ENCODE measurements at regions of chr14 and their contacts with region 1.

Region 1: GRCh38 chr14:74860906-74861733 is 14.8 kb downstream of the PROX2 start:
- DNase-seq: peak; percentile 97
- H3K4me3 Mint-ChIP-seq: no peak overlapping the region
- H3K27ac Mint-ChIP-seq: no peak overlapping the region
- H3K4me1 Mint-ChIP-seq: peaks cover 2% of the 10 kb centered on the region
- H3K27me3 Mint-ChIP-seq: no peaks in the 10 kb centered on the region

Region 2: DNA sequence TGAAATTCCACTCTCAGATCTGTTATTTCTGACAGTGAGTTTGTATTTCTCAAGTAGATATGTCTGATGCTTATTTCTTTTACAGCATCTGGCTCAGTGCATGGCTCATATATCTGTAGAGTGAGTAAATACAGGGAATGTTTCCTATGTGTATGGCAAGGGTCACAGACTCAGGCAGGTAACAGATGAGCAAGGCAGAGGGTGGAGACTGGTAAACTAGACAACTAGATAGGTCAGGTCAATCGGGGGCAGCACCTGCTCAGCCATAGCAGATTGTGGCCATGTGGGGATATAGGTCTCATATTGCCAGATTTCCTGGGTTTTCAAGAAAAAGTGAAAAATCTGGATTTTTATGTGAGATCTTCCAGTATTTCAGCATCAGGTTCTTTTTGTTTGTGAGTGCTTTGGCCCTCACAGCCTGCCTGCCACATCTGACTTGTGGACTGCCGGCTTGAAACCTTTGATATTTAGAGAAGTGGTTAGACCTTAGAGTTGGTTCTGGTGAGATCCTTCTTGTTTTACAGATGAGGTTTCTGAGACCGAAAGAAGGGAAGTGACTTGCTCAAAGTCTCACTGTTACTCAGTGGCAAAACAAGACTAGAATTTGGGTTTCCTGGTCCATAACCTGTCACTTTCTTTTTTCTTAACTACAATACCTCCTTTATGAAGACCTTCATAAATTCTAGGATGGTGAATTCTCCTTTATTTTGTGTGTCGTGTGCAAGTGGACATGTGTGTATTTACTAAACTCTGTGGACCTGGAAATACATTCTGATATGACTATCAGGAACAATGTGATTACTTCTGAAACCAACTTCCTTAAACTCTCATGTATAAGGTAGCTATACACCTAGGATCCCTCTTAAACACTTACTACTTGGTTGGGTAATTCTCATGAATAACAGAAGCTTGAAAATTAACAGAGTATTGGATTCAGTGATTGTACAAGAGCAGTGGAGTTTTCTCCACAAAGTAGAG is 19.6 kb before region 1 on chr14:
- CTCF ChIA-PET with region 1: interaction called, 14 read pairs
- intact Hi-C with region 1: no loop called
- DNase-seq: peak; percentile 46
- H3K4me3 Mint-ChIP-seq: no peak overlapping the region
- H3K27ac Mint-ChIP-seq: peak overlapping the region; percentile 54
- H3K4me1 Mint-ChIP-seq: peaks cover 54% of the 10 kb centered on the region
- H3K27me3 Mint-ChIP-seq: no peaks in the 10 kb centered on the region

Region 3: GRCh38 chr14:74881431-74882361 is 20.6 kb after region 1 on chr14 and contains the start of gene DLST:
- CTCF ChIA-PET with region 1: interaction called, 73 read pairs
- intact Hi-C with region 1: no loop called
- DNase-seq: peak; percentile 87
- H3K4me3 Mint-ChIP-seq: peak within 1 kb of the TSS; percentile 91
- H3K27ac Mint-ChIP-seq: peak within 1 kb of the TSS; percentile 94
- H3K4me1 Mint-ChIP-seq: peaks cover 63% of the 10 kb centered on the region
- H3K27me3 Mint-ChIP-seq: no peaks in the 10 kb centered on the region
- total RNA-seq, gene DLST: 126 to 132 TPM

Region 4: DNA sequence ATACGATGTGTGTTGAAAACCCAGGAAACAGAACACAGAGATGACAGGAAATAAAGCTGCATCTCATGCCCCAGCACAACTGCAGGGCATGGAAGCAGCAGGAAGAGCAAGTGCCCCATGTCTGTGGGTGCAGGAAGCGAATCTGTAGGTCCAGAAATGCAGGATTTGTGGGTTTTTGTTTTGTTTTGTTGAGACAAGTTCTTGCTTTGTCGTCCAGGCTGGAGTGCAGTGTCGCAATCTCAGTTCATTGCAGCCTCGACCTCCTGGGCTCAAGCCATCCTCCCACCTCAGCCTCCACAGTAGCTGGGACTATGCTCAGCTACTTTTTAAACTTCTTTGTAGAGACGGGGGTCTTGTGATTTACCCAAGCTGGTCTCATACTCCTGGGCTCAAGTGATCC is 68.1 kb after region 1 on chr14:
- CTCF ChIA-PET with region 1: interaction called, 14 read pairs
- intact Hi-C with region 1: no loop called
- DNase-seq: no peak
- H3K4me3 Mint-ChIP-seq: no peak overlapping the region
- H3K27ac Mint-ChIP-seq: no peak overlapping the region
- H3K4me1 Mint-ChIP-seq: peaks cover 10% of the 10 kb centered on the region
- H3K27me3 Mint-ChIP-seq: no peaks in the 10 kb centered on the region

Region 5: DNA sequence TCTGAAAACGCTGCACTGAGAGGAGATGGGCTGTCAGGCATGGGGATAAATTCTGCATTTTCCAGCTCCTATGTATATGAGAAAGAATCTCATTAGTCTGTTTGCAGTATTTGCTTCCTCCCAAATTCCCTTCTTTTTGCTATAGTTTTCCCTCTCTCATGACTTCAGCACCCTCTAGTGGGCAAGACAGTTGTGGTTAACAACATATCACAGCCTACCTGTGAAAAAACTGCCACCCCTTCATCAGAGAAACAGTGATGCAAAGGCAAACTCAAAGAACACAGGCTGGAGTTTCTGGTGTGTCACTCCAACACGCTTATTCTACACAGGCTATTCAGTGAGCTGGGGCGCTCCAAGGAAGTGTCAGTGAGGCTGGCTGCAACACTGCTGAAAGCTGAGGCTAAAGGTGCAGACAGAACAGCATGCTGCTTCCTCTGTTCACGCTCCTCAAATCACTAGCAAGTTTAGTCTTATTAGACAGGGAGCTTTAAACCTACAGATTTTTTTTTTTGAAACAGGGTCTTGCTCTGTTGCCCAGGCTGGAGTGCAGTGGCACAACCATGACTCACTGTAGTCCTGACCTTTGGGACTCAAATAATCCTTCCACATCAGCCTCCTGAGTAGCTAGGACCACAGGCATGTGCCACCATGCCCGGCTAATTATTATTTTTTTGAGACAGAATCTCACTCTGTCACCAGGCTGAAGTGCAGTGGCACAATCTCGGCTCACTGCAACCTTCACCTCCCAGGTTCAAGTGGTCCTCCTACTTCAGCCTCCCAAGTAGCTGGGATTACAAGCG is 227.7 kb after region 1 on chr14:
- CTCF ChIA-PET with region 1: interaction called, 48 read pairs
- intact Hi-C with region 1: loop called (anchors 1 kb)
- DNase-seq: peak; percentile 62
- H3K4me3 Mint-ChIP-seq: no peak overlapping the region
- H3K27ac Mint-ChIP-seq: no peak overlapping the region
- H3K4me1 Mint-ChIP-seq: no peaks in the 10 kb centered on the region
- H3K27me3 Mint-ChIP-seq: no peaks in the 10 kb centered on the region

Measured in activated naive CD4-positive, alpha-beta T cell treated with anti-CD3 and anti-CD28 coated beads for 36 hours (primary cell).